Ascending aorta (tissue), 2 donors: ENCODE measurements at regions of chr6 and their contacts with region 1.

Region 1: DNA sequence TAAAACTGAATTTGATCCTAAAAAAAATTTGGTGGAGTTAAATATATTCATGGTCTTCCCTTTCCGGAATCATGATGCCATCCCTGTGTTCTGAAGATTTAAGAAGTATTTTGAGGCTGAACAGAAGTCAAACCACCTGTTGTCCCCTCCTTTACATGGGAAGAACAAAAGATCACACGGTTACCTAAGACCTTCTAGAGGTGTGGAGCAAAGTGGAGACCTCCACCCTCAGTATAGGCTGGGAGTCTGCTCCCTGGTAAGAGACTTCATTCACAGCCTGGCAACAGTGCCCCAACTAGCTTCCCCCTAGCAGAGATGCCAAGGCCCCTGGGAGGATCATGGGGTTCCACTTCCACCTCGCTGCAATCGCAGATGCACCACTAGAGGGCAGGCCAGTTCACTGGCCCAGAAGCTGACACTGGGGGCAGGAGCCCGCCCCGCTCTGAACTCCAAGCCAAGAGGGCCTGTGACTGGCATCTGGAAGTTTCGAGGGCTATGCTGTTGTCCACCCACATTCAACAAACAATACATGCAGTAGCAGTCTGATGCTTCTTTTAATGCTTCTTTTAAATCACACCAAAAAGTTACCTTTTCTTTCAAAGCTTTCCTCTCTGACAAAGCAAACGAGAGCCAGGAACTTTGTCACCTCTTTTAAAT is 19.5 kb upstream of the UBE2J1 start:
- DNase-seq: peak; percentile 18 to 86
- H3K4me3 ChIP-seq: no peak overlapping the region
- H3K27ac ChIP-seq: no peak overlapping the region
- H3K4me1 ChIP-seq: peaks cover 0 to 5% of the 10 kb centered on the region in 2 donors
- H3K27me3 ChIP-seq: no peaks in the 10 kb centered on the region
- CTCF ChIP-seq: peak; percentile 82 to 91 (median 82)

Region 2: DNA sequence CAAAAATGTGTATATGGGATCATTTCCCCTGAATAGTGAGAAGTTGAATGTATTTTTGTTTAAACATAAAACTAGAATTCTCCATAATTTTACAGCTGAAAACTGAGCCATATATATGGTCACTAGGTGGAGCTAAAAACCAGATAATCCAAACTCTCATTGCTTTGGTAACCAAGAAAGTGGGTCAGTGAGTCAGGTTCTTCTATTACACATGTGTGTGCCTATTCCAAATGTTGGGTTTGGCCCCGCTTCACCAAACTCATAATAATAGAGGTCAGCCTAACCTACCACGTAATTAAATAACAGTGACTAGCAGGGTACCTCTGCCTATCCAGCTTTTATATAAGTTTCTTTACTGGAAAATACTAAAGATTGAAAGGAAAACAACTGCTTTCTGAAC is 389.3 kb before region 1 on chr6:
- intact Hi-C with region 1: loop called (anchors 5 kb)
- DNase-seq: peak; percentile 43 to 91
- H3K4me3 ChIP-seq: peak overlapping the region; percentile 15 to 33
- H3K27ac ChIP-seq: no peak overlapping the region
- H3K4me1 ChIP-seq: peaks cover 4 to 7% of the 10 kb centered on the region in 2 donors
- H3K27me3 ChIP-seq: no peaks in the 10 kb centered on the region
- CTCF ChIP-seq: peak; percentile 53 to 74 (median 64)

Region 3: DNA sequence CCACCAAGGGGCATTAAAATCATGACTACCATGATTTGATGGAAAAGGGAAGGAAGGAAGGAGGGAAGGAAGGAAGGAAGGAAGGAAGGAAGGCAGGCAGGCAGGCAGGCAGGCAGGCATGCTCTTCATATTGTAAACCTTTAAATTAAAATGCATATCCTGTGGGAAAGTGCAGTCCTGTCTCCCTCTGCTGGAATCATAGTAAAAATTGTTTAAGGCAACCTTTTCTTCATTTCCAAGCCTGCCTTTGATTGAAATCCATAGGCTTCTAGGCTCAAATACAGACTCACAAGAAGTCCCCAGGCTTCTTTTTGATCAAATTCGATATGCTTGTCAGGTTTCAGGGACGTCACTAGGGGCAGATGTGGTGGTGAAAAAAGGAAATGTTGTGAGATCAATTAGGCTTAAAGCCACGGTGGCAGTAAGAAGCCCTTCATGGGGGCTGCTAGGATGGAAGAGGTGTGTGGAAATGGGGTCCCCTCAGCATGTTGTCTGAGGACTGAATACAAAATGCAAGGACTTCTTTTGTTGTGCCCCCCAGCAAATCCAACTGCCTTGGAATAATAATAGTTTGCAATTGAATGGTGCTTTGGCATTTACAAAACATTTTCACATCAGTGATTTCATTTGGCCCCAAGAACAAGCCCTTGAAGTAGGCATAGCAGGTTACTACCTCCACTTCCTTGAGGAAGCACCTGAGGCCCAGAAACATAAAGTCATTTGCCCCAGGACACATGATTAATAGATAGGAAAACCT is 129.2 kb before region 1 on chr6:
- intact Hi-C with region 1: no loop called
- DNase-seq: no peak
- H3K4me3 ChIP-seq: no peak overlapping the region
- H3K27ac ChIP-seq: no peak overlapping the region
- H3K4me1 ChIP-seq: no peaks in the 10 kb centered on the region
- H3K27me3 ChIP-seq: no peaks in the 10 kb centered on the region
- CTCF ChIP-seq: peak; percentile 34 to 66 (median 47)

Region 4: GRCh38 chr6:89311853-89312531 is 60.0 kb before region 1 on chr6:
- intact Hi-C with region 1: loop called (anchors 5 kb)
- DNase-seq: peak; percentile 21 to 77
- H3K4me3 ChIP-seq: peak overlapping the region in 1 of 2 donors; percentile 35
- H3K27ac ChIP-seq: peak overlapping the region; percentile 53 to 65
- H3K4me1 ChIP-seq: peaks cover 4 to 16% of the 10 kb centered on the region in 2 donors
- H3K27me3 ChIP-seq: no peaks in the 10 kb centered on the region
- CTCF ChIP-seq: peak; percentile 32 to 52 (median 36)

Region 5: GRCh38 chr6:89411145-89412070 is 39.4 kb after region 1 on chr6:
- intact Hi-C with region 1: loop called (anchors 2 kb)
- DNase-seq: peak in 1 of 2 donors; percentile 69
- H3K4me3 ChIP-seq: peak overlapping the region; percentile 74 to 94
- H3K27ac ChIP-seq: peak overlapping the region; percentile 68 to 80
- H3K4me1 ChIP-seq: no peaks in the 10 kb centered on the region
- H3K27me3 ChIP-seq: no peaks in the 10 kb centered on the region
- CTCF ChIP-seq: no peak

Region 6: GRCh38 chr6:89597988-89598692 is 226.2 kb after region 1 on chr6:
- intact Hi-C with region 1: loop called (anchors 5 kb)
- DNase-seq: peak in 1 of 2 donors; percentile 66
- H3K4me3 ChIP-seq: no peak overlapping the region
- H3K27ac ChIP-seq: peak overlapping the region in 1 of 2 donors; percentile 3
- H3K4me1 ChIP-seq: peaks cover 3 to 10% of the 10 kb centered on the region in 2 donors
- H3K27me3 ChIP-seq: no peaks in the 10 kb centered on the region
- CTCF ChIP-seq: peak; percentile 23 to 44 (median 37)

Region 7: GRCh38 chr6:89610149-89610642 is 238.2 kb after region 1 on chr6:
- intact Hi-C with region 1: loop called (anchors 5 kb)
- DNase-seq: peak in 1 of 2 donors; percentile 78
- H3K4me3 ChIP-seq: no peak overlapping the region
- H3K27ac ChIP-seq: no peak overlapping the region
- H3K4me1 ChIP-seq: no peaks in the 10 kb centered on the region
- H3K27me3 ChIP-seq: no peaks in the 10 kb centered on the region
- CTCF ChIP-seq: peak; percentile 67 to 82 (median 73)

Region 8: GRCh38 chr6:89638320-89639195 is 266.6 kb after region 1 on chr6 and contains the start of gene LYRM2:
- intact Hi-C with region 1: loop called (anchors 5 kb)
- DNase-seq: peak; percentile 76 to 96
- H3K4me3 ChIP-seq: peak within 1 kb of the TSS; percentile 56 to 72
- H3K27ac ChIP-seq: peak within 1 kb of the TSS; percentile 84 to 89
- H3K4me1 ChIP-seq: peaks cover 6 to 9% of the 10 kb centered on the region in 2 donors
- H3K27me3 ChIP-seq: no peaks in the 10 kb centered on the region
- CTCF ChIP-seq: peak in 1 of 3 experiments; percentile 10
- total RNA-seq, gene LYRM2: 5.6 TPM